Activated CD4-positive, alpha-beta T cell treated with anti-CD3 and anti-CD28 coated beads, Interleukin-2, amount 10 ng/mL, durations not matched to agents 24 days and 14 days (primary cell): ENCODE measurements at regions of chr1 and their contacts with region 1.

Region 1: GRCh38 chr1:38990738-38991639 is at the start of gene AKIRIN1:
- DNase-seq: peak; percentile 99
- H3K4me3 Mint-ChIP-seq: peak within 1 kb of the TSS; percentile 87
- H3K27ac Mint-ChIP-seq: peak within 1 kb of the TSS; percentile 90
- H3K4me1 Mint-ChIP-seq: peaks cover 35% of the 10 kb centered on the region
- H3K27me3 Mint-ChIP-seq: peaks cover 3% of the 10 kb centered on the region
- total RNA-seq, gene AKIRIN1: 76.0 and 79.3 TPM in 2 replicates

Region 2: GRCh38 chr1:38859561-38860453 is 131.2 kb before region 1 on chr1 and contains the start of gene RRAGC:
- intact Hi-C with region 1: loop called (anchors 5 kb)
- DNase-seq: peak; percentile 100
- H3K4me3 Mint-ChIP-seq: peak within 1 kb of the TSS; percentile 88
- H3K27ac Mint-ChIP-seq: peak within 1 kb of the TSS; percentile 77
- H3K4me1 Mint-ChIP-seq: peaks cover 24% of the 10 kb centered on the region
- H3K27me3 Mint-ChIP-seq: no peaks in the 10 kb centered on the region
- total RNA-seq, gene RRAGC: 10.9 and 11.0 TPM in 2 replicates

Region 3: GRCh38 chr1:38973659-38974424 is 17.1 kb before region 1 on chr1:
- intact Hi-C with region 1: no loop called
- DNase-seq: no peak
- H3K4me3 Mint-ChIP-seq: no peak overlapping the region
- H3K27ac Mint-ChIP-seq: no peak overlapping the region
- H3K4me1 Mint-ChIP-seq: peaks cover 7% of the 10 kb centered on the region
- H3K27me3 Mint-ChIP-seq: no peaks in the 10 kb centered on the region

Region 4: DNA sequence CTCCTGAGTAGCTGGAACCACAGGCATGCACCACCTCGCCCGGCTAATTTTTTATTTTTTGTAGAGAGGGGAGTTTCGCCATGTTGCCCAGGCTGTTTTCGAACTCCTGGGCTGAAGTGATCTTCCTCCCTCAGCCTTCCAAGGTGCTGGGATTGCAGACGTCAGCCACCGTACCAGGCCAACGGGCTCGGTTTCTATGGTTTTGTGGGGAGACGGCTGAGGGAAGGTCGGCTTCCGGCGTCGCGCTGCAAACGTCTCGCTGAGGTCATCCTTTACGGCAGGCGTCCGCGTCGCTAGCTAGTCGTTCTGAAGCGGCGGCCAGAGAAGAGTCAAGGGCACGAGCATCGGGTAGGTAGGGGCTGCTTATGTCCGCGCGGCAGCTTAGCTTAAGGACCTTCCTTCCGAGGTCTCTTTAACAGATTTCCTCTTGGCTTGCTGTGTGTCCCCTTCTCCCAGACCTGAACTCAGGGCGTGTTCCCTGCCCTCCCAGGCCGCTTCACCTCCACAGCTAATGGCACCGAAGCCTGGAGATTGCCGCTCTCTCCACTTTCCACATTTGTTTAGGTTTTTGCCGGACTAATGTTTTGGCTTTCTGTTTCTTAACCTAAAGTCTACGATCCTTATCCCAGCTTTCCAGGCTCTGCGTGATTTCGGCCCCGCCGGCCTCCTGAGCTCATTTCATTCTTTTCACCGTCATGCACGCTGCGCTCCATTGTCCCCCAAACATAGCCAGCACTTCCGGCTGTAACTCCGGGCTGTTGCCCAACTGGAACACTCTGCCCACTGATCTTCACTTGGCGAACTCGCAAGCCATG is 35.3 kb after region 1 on chr1 and contains the start of gene NDUFS5:
- intact Hi-C with region 1: loop called (anchors 2 kb)
- DNase-seq: peak; percentile 95
- H3K4me3 Mint-ChIP-seq: peak within 1 kb of the TSS; percentile 91
- H3K27ac Mint-ChIP-seq: peak within 1 kb of the TSS; percentile 97
- H3K4me1 Mint-ChIP-seq: peaks cover 23% of the 10 kb centered on the region
- H3K27me3 Mint-ChIP-seq: peaks cover 2% of the 10 kb centered on the region
- total RNA-seq, gene NDUFS5: 162 and 164 TPM in 2 replicates

Region 5: DNA sequence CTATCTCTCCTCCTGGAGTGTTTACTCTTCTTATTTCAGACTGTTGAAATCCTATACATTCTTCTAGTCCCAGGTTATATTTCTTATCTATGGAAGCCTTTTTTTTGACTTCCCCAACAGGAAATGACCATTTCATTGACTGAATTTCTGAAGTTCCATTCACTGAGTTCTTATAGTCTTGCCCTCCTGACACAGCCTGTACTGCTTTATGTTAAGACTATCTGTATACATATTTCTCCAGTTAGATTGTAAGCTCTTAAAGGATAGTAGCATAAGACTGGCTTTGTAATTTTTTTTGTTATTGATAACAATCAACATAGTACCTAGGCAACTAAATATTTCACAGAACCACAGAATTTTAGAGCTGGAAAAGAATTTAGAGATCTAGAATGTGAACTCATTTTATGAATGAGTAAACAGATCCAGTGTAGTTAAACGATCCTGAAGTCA is 198.6 kb after region 1 on chr1:
- intact Hi-C with region 1: loop called (anchors 5 kb)
- DNase-seq: no peak
- H3K4me3 Mint-ChIP-seq: peak overlapping the region; percentile 25
- H3K27ac Mint-ChIP-seq: peak overlapping the region; percentile 87
- H3K4me1 Mint-ChIP-seq: peaks cover 73% of the 10 kb centered on the region
- H3K27me3 Mint-ChIP-seq: no peaks in the 10 kb centered on the region